ENCODE measurements at regions of chr11 and their contacts with region 1.

Region 1: DNA sequence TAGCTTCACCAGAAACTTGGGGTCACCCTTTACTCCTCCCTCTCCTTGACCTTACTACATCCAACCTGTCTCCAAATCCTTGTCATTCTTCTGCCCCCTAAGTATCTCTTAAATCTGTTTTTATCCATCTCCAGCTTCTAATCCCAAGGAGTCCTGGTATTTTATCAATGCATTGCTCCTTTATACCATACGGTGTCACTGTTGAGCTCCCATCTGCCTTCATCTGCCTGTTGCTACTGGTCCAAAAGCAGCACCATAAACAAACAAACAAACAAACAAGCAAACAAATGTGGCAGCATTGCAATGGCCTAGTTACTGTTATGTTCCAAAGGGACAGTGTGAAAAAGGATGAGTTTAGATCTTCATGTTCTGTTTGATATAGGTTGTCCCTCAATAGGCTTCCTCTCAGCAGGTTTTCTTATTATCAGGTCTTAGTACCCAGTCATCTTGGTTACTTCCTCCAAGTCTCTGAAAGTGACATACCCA is 34.2 kb downstream of the DNHD1 start:
- DNase-seq: peak; percentile 61
- H3K4me3 ChIP-seq: no peak overlapping the region
- H3K27ac ChIP-seq: no peak overlapping the region
- H3K4me1 ChIP-seq: peaks cover 0 to 3% of the 10 kb centered on the region in 2 experiments; a peak in 2 of 4 replicates
- H3K27me3 ChIP-seq: no peaks in the 10 kb centered on the region
- CTCF ChIP-seq: peak; percentile 91
- EP300 ChIP-seq: no peak
- RAD21 ChIP-seq: peak; percentile 85

Region 2: DNA sequence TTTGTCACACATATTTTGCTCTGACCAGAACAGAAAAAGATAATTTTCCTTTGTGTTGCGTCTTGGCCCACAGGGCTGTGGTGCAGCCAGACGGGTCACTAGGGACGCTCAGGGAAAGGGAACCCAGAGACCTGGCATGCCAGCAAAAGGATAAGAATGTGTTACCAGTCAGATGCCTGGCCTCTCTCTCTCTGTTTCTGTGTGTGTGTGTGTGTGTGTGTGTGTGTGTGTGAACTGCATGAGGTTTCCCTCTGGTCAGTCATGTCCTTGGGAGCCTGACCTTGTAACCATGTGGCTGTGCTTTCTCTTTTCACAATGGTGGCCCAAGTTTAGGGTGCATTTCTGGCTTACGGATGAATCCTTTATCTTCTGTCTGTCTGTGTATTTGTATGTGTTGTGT is 246.3 kb before region 1 on chr11:
- CTCF ChIA-PET with region 1: no interaction called
- POLR2A ChIA-PET with region 1: no interaction called
- DNase-seq: no peak
- H3K4me3 ChIP-seq: no peak overlapping the region
- H3K27ac ChIP-seq: no peak overlapping the region
- H3K4me1 ChIP-seq: no peaks in the 10 kb centered on the region
- H3K27me3 ChIP-seq: peaks cover 37% of the 10 kb centered on the region; the same call in 1 of the 2 replicates
- CTCF ChIP-seq: no peak
- EP300 ChIP-seq: no peak
- RAD21 ChIP-seq: no peak

Region 3: GRCh38 chr11:6497069-6497839 is 34.1 kb before region 1 on chr11 and contains the start of gene DNHD1:
- CTCF ChIA-PET with region 1: interaction called, 14 read pairs
- POLR2A ChIA-PET with region 1: no interaction called
- DNase-seq: no peak
- H3K4me3 ChIP-seq: no peak within 1 kb of the TSS
- H3K27ac ChIP-seq: no peak within 1 kb of the TSS
- H3K4me1 ChIP-seq: no peaks in the 10 kb centered on the region
- H3K27me3 ChIP-seq: no peaks in the 10 kb centered on the region
- CTCF ChIP-seq: no peak
- EP300 ChIP-seq: no peak
- RAD21 ChIP-seq: no peak
- polyA plus RNA-seq, gene DNHD1: 5.3 and 7.6 TPM in 2 replicates

Region 4: DNA sequence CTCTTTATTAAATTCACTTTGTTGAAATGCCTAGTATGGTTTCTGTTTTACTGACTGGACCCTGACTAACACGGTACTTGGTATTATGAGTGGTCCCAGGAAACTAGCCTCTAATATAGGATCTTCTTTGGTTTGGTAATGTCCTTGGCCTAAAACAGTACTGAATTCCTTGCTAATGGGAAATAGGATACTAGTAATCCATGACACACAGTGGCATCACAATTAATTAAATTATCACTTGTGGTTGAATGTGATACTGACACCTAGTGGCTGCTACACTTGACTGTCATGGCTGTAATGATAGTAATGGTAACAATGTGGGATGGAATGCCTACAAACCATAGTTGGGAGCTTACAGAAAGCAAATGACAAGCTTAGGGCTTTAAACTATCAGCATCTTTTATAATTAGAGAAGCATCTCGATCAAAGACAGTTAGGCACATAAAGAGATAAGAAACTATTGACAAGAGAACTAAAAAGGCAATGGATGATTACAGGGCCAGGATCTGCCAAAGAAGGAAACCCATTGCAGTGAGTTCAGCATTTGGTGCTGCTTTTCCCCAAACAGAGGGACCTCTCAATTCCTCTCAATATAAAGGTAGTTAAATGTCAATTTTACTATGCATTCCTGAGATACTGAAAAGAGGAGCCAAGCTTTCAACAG is 25.6 kb before region 1 on chr11:
- CTCF ChIA-PET with region 1: interaction called, 18 read pairs
- POLR2A ChIA-PET with region 1: no interaction called
- DNase-seq: peak; percentile 62
- H3K4me3 ChIP-seq: no peak overlapping the region
- H3K27ac ChIP-seq: peak overlapping the region in 1 of 2 experiments; percentile 24; a peak in 1 of 4 replicates
- H3K4me1 ChIP-seq: 0 out of 4 replicates have a peak, but pooled peaks cover 0 to 4% of the 10 kb centered on the region in 2 experiments
- H3K27me3 ChIP-seq: no peaks in the 10 kb centered on the region
- CTCF ChIP-seq: peak; percentile 76
- EP300 ChIP-seq: no peak
- RAD21 ChIP-seq: peak; percentile 67

Region 5: DNA sequence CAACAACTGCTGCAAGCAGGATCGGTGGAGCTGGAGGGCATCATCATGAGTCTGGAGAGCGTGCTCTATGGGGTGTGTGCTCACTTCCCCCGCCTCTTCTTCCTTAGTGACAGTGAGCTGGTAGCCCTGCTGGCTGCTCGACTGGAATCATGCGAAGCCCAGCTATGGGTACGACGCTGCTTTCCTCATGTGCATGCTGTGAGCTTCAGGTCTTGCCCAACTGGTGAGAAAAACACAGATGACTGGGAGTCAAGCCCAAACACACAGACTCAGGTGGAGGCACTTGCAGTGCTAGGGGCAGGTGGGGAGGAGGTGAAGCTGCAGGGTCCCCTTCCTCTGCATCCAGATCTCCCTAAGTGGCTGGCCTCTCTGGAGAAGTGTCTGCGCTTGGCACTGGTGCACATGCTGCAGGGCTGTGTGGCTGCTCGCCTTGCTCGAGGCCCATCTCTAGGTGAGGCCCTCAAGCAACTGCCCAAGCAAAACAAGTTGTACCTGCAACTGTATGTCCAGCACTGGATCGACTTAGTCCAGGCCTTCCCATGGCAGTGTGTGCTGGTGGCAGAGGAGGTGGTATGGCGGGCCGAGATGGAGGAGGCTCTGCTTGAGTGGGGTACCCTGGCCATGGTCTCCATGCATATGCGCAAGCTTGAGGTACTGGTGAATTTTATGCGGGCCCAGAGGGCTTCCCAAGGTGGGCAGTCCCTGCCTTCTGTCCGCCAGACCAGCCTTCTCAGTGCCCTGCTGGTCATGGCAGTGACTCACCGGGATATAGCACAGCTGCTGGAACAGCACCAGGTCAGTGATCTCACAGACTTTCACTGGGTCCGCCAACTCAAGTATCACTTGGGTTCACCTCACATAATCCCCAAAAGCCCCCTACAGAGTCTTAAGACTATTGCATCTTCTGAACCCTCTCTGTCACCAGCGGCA is 13.9 kb after region 1 on chr11:
- CTCF ChIA-PET with region 1: interaction called, 60 read pairs
- POLR2A ChIA-PET with region 1: no interaction called
- DNase-seq: no peak
- H3K4me3 ChIP-seq: no peak overlapping the region
- H3K27ac ChIP-seq: no peak overlapping the region
- H3K4me1 ChIP-seq: no peaks in the 10 kb centered on the region
- H3K27me3 ChIP-seq: no peaks in the 10 kb centered on the region
- CTCF ChIP-seq: no peak
- EP300 ChIP-seq: no peak
- RAD21 ChIP-seq: no peak

Region 6: DNA sequence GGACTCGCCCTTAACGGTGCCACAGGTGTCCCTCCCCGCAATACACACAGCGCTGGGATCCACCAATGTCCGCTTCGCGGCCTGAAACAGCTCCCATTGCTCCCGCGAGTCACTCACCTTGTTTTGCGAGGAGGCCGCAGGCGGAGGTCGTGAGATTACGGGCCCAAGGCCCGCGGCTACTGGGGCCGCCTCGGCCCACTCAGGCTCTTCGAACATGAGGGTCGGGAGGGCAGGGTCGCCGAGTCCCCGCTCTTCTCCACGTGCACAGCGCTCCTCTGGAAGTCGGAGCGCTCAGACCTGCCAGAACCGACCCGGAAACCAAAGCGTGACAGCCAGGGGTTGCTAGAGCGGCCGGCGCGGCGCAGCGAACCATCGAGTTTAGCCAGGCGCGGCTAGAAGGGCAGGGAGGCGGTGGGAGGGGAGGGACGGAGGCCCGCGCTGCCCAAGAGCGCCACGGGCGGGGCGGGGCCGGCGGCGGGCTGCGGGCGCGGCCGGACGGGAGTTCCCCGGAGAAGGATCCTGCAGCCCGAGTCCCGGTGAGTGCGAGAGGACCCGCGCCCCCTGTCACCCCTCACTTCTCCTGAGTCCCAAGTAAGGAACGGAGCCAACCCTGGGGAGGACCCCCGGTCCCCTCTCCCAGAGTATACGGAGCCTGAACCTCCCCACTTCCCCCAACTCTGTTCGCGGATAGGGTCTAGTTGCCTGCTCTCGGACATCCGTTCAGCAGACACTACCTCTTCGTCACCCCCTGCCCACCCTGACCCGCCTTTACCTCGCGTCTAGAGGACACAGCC is 72.2 kb after region 1 on chr11 and contains the starts of genes ILK and RRP8:
- CTCF ChIA-PET with region 1: interaction called, 12 read pairs
- POLR2A ChIA-PET with region 1: interaction called, 3 read pairs
- DNase-seq: peak; percentile 96
- H3K4me3 ChIP-seq: peak within 1 kb of the TSS; percentile 67 to 95
- H3K27ac ChIP-seq: peak within 1 kb of the TSS; percentile 79 to 91
- H3K4me1 ChIP-seq: peaks cover 26 to 40% of the 10 kb centered on the region in 2 experiments
- H3K27me3 ChIP-seq: no peaks in the 10 kb centered on the region
- CTCF ChIP-seq: no peak; the same call in 1 of the 2 replicates
- EP300 ChIP-seq: peak; percentile 8 to 35; a peak in 2 of 4 replicates
- RAD21 ChIP-seq: peak; percentile 5; the same call in 1 of the 2 replicates
- polyA plus RNA-seq, gene ILK: 241 and 268 TPM in 2 replicates
- polyA plus RNA-seq, gene RRP8: 7.8 and 8.6 TPM in 2 replicates

Region 7: GRCh38 chr11:6612213-6613041 is 81.1 kb after region 1 on chr11 and contains the start of gene TAF10:
- CTCF ChIA-PET with region 1: interaction called, 15 read pairs
- POLR2A ChIA-PET with region 1: interaction called, 3 read pairs
- DNase-seq: peak; percentile 95
- H3K4me3 ChIP-seq: peak within 1 kb of the TSS; percentile 65 to 93
- H3K27ac ChIP-seq: peak within 1 kb of the TSS; percentile 94 to 99
- H3K4me1 ChIP-seq: peaks cover 10 to 32% of the 10 kb centered on the region in 2 experiments
- H3K27me3 ChIP-seq: no peaks in the 10 kb centered on the region
- CTCF ChIP-seq: peak; percentile 62
- EP300 ChIP-seq: no peak
- RAD21 ChIP-seq: no peak
- polyA plus RNA-seq, gene TAF10: 163 and 213 TPM in 2 replicates

Region 8: GRCh38 chr11:6705905-6706535 is 174.7 kb after region 1 on chr11:
- CTCF ChIA-PET with region 1: interaction called, 46 read pairs
- POLR2A ChIA-PET with region 1: no interaction called
- DNase-seq: peak; percentile 47
- H3K4me3 ChIP-seq: no peak overlapping the region; a peak in 1 of 4 replicates
- H3K27ac ChIP-seq: no peak overlapping the region
- H3K4me1 ChIP-seq: 0 out of 4 replicates have a peak, but pooled peaks cover 0 to 2% of the 10 kb centered on the region in 2 experiments
- H3K27me3 ChIP-seq: no peaks in the 10 kb centered on the region; the same call in 1 of the 2 replicates
- CTCF ChIP-seq: peak; percentile 93
- EP300 ChIP-seq: no peak
- RAD21 ChIP-seq: peak; percentile 79